A673 (cell line): ENCODE measurements at regions of chr12 and their contacts with region 1.

Region 1: DNA sequence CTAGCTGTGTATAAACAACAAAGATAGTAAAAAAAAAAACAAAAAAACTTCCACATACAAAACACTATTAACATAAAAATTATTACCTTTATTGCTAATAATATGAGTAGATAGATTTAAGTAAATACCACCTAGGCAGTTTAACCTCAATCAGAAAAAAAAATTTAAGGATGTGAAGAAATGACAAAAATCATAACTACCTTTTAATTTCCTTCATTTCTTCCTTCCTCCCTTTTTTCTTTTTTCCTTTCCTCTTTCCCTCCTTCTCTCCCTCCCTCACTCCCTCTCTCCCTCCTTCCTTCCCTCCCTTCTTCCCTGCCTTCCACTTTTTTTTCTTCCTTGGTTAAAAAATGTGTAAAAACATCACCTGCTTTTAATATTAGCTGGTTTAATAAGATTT is 81.7 kb downstream of the SOX5 start:
- DNase-seq: no peak
- H3K4me3 ChIP-seq: no peak overlapping the region
- H3K27ac ChIP-seq: no peak overlapping the region
- H3K4me1 ChIP-seq: peaks cover 5% of the 10 kb centered on the region
- H3K27me3 ChIP-seq: no peaks in the 10 kb centered on the region
- CTCF ChIP-seq: no peak

Region 2: DNA sequence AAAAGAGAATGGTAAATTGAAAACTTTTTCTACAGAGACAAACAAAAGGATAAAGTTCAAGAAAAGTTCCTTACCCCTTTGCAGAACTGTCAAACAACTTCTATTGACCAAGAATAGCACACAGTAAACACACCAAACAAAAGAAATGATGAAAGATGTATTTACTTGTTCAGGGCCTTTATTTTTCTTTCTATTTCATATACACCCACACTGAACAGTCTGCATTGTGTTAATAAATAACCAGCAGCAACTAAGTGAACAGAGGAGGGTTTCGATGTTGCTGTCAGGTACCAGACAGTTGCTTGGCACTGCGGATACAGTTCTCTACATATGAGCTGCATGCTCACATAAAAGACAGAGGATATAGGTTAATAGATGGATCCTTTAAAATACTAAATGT is 40.4 kb before region 1 on chr12:
- CTCF ChIA-PET with region 1: no interaction called
- POLR2A ChIA-PET with region 1: no interaction called
- intact Hi-C with region 1: no loop called
- DNase-seq: no peak
- H3K4me3 ChIP-seq: no peak overlapping the region
- H3K27ac ChIP-seq: no peak overlapping the region
- H3K4me1 ChIP-seq: no peaks in the 10 kb centered on the region
- H3K27me3 ChIP-seq: no peaks in the 10 kb centered on the region
- CTCF ChIP-seq: no peak

Region 3: DNA sequence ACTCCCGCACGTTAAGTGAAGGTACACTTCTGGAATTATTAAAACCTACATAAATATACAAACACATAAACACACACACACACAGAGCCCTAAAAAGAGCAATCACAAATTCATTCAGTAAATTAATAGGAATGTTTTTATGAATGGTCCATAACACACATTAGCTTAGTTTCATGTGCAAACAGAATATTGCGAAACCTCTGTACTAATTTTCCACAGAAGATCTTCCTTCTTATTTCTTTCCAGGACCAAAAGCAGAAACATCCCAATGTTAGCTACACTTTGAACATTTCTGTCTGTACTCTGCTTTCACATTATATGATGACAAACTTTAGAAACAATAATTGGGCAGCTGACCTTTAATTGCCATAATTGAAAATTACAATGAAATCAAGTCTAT is 19.9 kb before region 1 on chr12:
- CTCF ChIA-PET with region 1: no interaction called
- POLR2A ChIA-PET with region 1: no interaction called
- intact Hi-C with region 1: no loop called
- DNase-seq: no peak
- H3K4me3 ChIP-seq: no peak overlapping the region
- H3K27ac ChIP-seq: no peak overlapping the region
- H3K4me1 ChIP-seq: peaks cover 5% of the 10 kb centered on the region
- H3K27me3 ChIP-seq: no peaks in the 10 kb centered on the region
- CTCF ChIP-seq: no peak

Region 4: DNA sequence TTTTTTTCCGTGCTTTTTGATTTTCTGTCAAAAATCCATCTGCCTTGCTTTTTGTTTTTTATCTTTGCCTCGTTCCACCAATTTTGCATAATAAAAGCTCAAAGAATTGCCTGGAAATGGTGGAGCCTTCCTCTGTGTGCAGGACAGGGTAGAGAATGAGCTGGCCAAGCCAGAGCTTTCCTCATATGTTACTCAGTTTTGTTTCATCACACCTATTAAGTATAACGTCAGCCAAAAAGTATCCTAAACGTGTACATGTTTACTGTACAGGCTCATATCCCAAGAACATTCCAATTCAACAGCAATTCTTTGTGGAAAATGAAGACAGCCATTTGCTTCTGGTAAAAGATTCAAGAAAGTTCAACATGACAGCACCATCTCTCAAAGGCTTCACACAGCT is 1876.5 kb after region 1 on chr12:
- CTCF ChIA-PET with region 1: no interaction called
- POLR2A ChIA-PET with region 1: interaction called, 13 read pairs
- intact Hi-C with region 1: no loop called
- DNase-seq: no peak
- H3K4me3 ChIP-seq: no peak overlapping the region
- H3K27ac ChIP-seq: no peak overlapping the region
- H3K4me1 ChIP-seq: peaks cover 10% of the 10 kb centered on the region
- H3K27me3 ChIP-seq: no peaks in the 10 kb centered on the region
- CTCF ChIP-seq: no peak